CD8-positive, alpha-beta memory T cell (primary cell): ENCODE measurements at regions of chr15 and their contacts with region 1.

Region 1: GRCh38 chr15:67134067-67134838 is 68.9 kb downstream of the SMAD3 start:
- DNase-seq: peak; percentile 44 to 81 (median 73)
- H3K4me3 ChIP-seq: peak overlapping the region; percentile 38
- H3K4me3 Mint-ChIP-seq: peak overlapping the region; percentile 73 to 92 (median 85)
- H3K27ac ChIP-seq: peak overlapping the region; percentile 55
- H3K27ac Mint-ChIP-seq: peak overlapping the region; percentile 92 to 100 (median 98)
- H3K4me1 ChIP-seq: peaks cover 86% of the 10 kb centered on the region
- H3K4me1 Mint-ChIP-seq: peaks cover 90 to 100% (median 99%) of the 10 kb centered on the region in 3 donors
- H3K27me3 ChIP-seq: no peaks in the 10 kb centered on the region
- H3K27me3 Mint-ChIP-seq: no peaks in the 10 kb centered on the region

Region 2: GRCh38 chr15:67146875-67147381 is 12.7 kb after region 1 on chr15:
- CTCF ChIA-PET with region 1: no interaction called
- POLR2A ChIA-PET with region 1: no interaction called
- DNase-seq: no peak
- H3K4me3 ChIP-seq: no peak overlapping the region
- H3K4me3 Mint-ChIP-seq: peak overlapping the region in 6 of 7 donors; percentile 21 to 62 (median 50)
- H3K27ac ChIP-seq: no peak overlapping the region
- H3K27ac Mint-ChIP-seq: peak overlapping the region in 7 of 8 donors; percentile 60 to 95 (median 87)
- H3K4me1 ChIP-seq: peaks cover 70% of the 10 kb centered on the region
- H3K4me1 Mint-ChIP-seq: peaks cover 87 to 96% (median 93%) of the 10 kb centered on the region in 3 donors
- H3K27me3 ChIP-seq: no peaks in the 10 kb centered on the region
- H3K27me3 Mint-ChIP-seq: peaks cover 0 to 2% of the 10 kb centered on the region in 2 donors

Region 3: GRCh38 chr15:67240235-67241131 is 106.2 kb after region 1 on chr15:
- CTCF ChIA-PET with region 1: no interaction called
- POLR2A ChIA-PET with region 1: interaction called, 12 read pairs
- DNase-seq: peak in 3 of 5 donors; percentile 5 to 53 (median 18)
- H3K4me3 ChIP-seq: no peak overlapping the region
- H3K4me3 Mint-ChIP-seq: peak overlapping the region in 6 of 7 donors; percentile 58 to 80 (median 68)
- H3K27ac ChIP-seq: no peak overlapping the region
- H3K27ac Mint-ChIP-seq: peak overlapping the region; percentile 43 to 92 (median 83)
- H3K4me1 ChIP-seq: peaks cover 34% of the 10 kb centered on the region
- H3K4me1 Mint-ChIP-seq: peaks cover 45 to 68% (median 63%) of the 10 kb centered on the region in 3 donors
- H3K27me3 ChIP-seq: no peaks in the 10 kb centered on the region
- H3K27me3 Mint-ChIP-seq: no peaks in the 10 kb centered on the region

Region 4: GRCh38 chr15:67307889-67308597 is 173.8 kb after region 1 on chr15:
- CTCF ChIA-PET with region 1: no interaction called
- POLR2A ChIA-PET with region 1: no interaction called
- DNase-seq: no peak
- H3K4me3 ChIP-seq: no peak overlapping the region
- H3K4me3 Mint-ChIP-seq: no peak overlapping the region
- H3K27ac ChIP-seq: no peak overlapping the region
- H3K27ac Mint-ChIP-seq: no peak overlapping the region
- H3K4me1 ChIP-seq: no peaks in the 10 kb centered on the region
- H3K4me1 Mint-ChIP-seq: no peaks in the 10 kb centered on the region
- H3K27me3 ChIP-seq: no peaks in the 10 kb centered on the region
- H3K27me3 Mint-ChIP-seq: no peaks in the 10 kb centered on the region